ENCODE measurements at regions of chr17 and their contacts with region 1.

Region 1: GRCh38 chr17:2244545-2245525 is 58.8 kb downstream of the SMG6 start:
- DNase-seq: peak; percentile 72 to 90 (median 86)
- ATAC-seq: peak; percentile 91
- H3K4me3 ChIP-seq: no peak overlapping the region
- H3K4me3 Mint-ChIP-seq: no peak overlapping the region
- H3K27ac ChIP-seq: peak overlapping the region in 1 of 2 experiments; percentile 23
- H3K27ac Mint-ChIP-seq: peak overlapping the region; percentile 78
- H3K4me1 ChIP-seq: peaks cover 11% of the 10 kb centered on the region
- H3K4me1 Mint-ChIP-seq: peaks cover 32% of the 10 kb centered on the region
- H3K27me3 ChIP-seq: no peaks in the 10 kb centered on the region
- H3K27me3 Mint-ChIP-seq: no peaks in the 10 kb centered on the region
- CTCF ChIP-seq: peak; percentile 94

Region 2: GRCh38 chr17:2064980-2065785 is 179.7 kb before region 1 on chr17:
- CTCF ChIA-PET with region 1: interaction called, 240 read pairs
- POLR2A ChIA-PET with region 1: interaction called, 3 read pairs
- intact Hi-C with region 1: no loop called
- DNase-seq: peak in 5 of 9 experiments; percentile 47 to 62 (median 56)
- ATAC-seq: peak; percentile 58
- H3K4me3 ChIP-seq: no peak overlapping the region
- H3K4me3 Mint-ChIP-seq: no peak overlapping the region
- H3K27ac ChIP-seq: no peak overlapping the region
- H3K27ac Mint-ChIP-seq: peak overlapping the region; percentile 67
- H3K4me1 ChIP-seq: peaks cover 7% of the 10 kb centered on the region
- H3K4me1 Mint-ChIP-seq: peaks cover 36% of the 10 kb centered on the region
- H3K27me3 ChIP-seq: no peaks in the 10 kb centered on the region
- H3K27me3 Mint-ChIP-seq: peaks cover 16% of the 10 kb centered on the region
- CTCF ChIP-seq: no peak

Region 3: GRCh38 chr17:2144701-2145100 is 100.1 kb before region 1 on chr17:
- CTCF ChIA-PET with region 1: interaction called, 12 read pairs
- POLR2A ChIA-PET with region 1: no interaction called
- intact Hi-C with region 1: no loop called
- DNase-seq: no peak
- ATAC-seq: no peak
- H3K4me3 ChIP-seq: no peak overlapping the region
- H3K4me3 Mint-ChIP-seq: no peak overlapping the region
- H3K27ac ChIP-seq: no peak overlapping the region
- H3K27ac Mint-ChIP-seq: no peak overlapping the region
- H3K4me1 ChIP-seq: no peaks in the 10 kb centered on the region
- H3K4me1 Mint-ChIP-seq: peaks cover 3% of the 10 kb centered on the region
- H3K27me3 ChIP-seq: no peaks in the 10 kb centered on the region
- H3K27me3 Mint-ChIP-seq: no peaks in the 10 kb centered on the region
- CTCF ChIP-seq: no peak

Region 4: DNA sequence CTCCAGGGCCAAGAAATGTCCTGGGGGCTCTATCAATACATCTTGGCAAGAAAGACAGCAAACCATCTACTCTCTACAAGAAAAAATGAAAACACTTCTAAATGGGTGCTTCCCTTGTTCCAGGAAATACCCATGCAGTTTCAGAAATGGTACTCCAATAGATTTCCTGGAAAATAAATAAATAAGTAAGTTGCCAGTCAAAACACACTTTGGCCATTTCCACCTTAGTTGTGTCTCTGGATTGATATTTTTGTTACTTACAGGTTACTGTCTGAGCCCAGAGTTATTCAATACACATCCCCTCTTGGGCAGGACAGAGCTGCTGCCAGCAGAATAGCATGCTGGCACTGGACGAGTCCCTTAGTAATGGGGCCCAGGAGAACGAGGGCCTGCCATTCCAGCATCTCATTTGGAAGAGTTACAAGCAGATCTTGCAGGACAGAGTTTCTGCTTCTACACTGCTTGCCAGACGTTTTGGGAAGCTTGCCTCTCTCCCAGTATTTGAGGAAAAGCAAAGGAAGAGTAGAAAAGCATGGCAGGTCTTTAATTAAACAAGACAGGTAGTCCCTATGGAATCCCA is 41.7 kb before region 1 on chr17:
- CTCF ChIA-PET with region 1: interaction called, 12 read pairs
- POLR2A ChIA-PET with region 1: interaction called, 3 read pairs
- intact Hi-C with region 1: no loop called
- DNase-seq: no peak
- ATAC-seq: no peak
- H3K4me3 ChIP-seq: no peak overlapping the region
- H3K4me3 Mint-ChIP-seq: no peak overlapping the region
- H3K27ac ChIP-seq: no peak overlapping the region
- H3K27ac Mint-ChIP-seq: peak overlapping the region; percentile 30
- H3K4me1 ChIP-seq: peaks cover 9% of the 10 kb centered on the region
- H3K4me1 Mint-ChIP-seq: peaks cover 20% of the 10 kb centered on the region
- H3K27me3 ChIP-seq: no peaks in the 10 kb centered on the region
- H3K27me3 Mint-ChIP-seq: no peaks in the 10 kb centered on the region
- CTCF ChIP-seq: no peak

Region 5: DNA sequence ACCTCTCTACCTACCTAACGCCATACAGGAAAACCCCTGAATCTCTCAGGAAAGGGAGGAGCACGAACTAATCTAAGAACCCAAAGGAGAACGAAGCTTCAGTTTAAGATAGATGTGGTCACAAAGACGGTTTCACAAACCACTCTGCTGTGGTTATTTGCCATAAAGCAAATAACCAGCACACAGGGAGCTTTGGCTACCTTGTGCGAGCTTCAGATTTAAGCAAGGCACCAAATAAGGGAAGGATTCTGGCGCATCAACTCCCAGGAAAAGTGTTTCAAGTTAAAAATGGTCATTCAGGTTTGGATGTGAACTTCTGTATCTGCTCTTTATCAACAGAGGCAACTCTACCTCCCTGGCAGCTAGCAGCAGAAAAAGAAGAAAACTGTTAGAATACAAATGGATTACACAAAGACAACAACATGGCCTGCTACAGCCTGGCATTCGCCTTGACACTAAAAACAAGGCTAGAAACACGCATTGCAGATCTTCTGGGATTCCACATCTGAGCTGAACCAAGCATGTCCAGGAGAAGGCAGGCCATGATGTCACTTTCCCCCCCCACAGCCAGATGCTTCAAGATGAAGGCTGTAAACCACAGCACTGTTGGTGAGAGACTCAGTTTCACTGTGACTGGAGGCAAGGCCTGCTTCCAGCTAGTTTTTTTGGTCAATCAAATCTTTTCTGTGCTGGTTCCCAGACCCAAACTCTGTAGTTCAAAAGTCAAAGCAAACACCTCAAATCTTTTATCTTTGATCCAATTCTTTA is 15.1 kb after region 1 on chr17:
- CTCF ChIA-PET with region 1: interaction called, 124 read pairs
- POLR2A ChIA-PET with region 1: interaction called, 6 read pairs
- intact Hi-C with region 1: no loop called
- DNase-seq: peak; percentile 7 to 87 (median 61)
- ATAC-seq: peak; percentile 55
- H3K4me3 ChIP-seq: peak overlapping the region in 1 of 2 experiments; percentile 21
- H3K4me3 Mint-ChIP-seq: peak overlapping the region; percentile 59
- H3K27ac ChIP-seq: peak overlapping the region; percentile 43 to 74
- H3K27ac Mint-ChIP-seq: peak overlapping the region; percentile 95
- H3K4me1 ChIP-seq: peaks cover 67% of the 10 kb centered on the region
- H3K4me1 Mint-ChIP-seq: peaks cover 69% of the 10 kb centered on the region
- H3K27me3 ChIP-seq: no peaks in the 10 kb centered on the region
- H3K27me3 Mint-ChIP-seq: no peaks in the 10 kb centered on the region
- CTCF ChIP-seq: no peak

Region 6: DNA sequence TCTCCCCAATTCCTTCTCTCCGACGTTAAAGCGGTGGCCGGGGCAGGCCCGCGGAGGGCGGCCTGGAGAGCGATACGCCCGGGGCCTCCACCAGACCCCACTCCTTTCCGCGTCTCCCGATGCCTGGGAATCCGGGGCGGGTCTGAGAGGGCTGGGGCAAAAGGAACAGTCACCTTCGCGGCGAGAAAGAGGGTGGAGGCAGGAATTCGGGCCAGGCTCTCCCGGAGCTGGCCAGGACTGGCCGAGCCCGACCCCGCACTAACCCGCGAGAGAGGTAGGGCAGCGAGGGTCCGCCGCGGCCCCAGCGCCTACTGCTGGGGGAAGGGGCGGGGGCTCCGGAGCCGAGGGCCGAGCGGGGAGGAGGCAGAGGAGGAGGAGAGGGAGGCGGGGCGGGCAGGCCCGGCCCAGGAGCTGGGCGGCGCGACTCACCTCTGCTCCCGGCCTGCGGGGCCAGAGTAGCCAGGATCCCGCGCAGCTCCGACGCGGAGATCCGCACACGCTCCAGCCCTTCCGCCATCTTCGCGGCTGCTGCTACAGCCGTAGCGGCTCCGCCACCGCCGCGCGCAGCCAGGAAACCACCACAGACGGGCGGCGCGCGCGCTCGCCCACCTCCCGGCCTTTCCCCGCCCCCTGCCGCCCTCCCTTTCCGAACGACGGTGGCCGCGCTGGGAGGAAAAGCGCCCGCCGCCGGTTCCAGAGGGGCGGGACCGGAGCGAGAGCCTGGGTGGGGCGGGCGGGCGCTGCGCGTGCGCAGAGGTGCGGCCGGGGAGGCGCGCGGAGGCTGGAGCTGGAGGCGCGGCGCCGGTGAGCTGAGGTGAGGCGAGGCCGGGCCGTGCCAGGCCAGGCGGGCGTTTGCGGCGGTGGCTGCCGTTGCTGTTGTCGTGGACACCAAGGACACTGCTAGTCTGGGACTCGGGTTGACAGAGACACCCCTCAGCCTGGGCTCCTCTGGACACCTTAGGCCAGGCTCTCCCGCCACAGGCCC is 58.7 kb after region 1 on chr17 and contains the starts of genes SMG6 and SRR:
- CTCF ChIA-PET with region 1: interaction called, 14 read pairs
- POLR2A ChIA-PET with region 1: no interaction called
- intact Hi-C with region 1: no loop called
- DNase-seq: peak; percentile 89 to 98 (median 95)
- ATAC-seq: peak; percentile 91
- H3K4me3 ChIP-seq: peak within 1 kb of the TSS; percentile 95 to 98
- H3K4me3 Mint-ChIP-seq: peak within 1 kb of the TSS; percentile 93
- H3K27ac ChIP-seq: peak within 1 kb of the TSS; percentile 76 to 85
- H3K27ac Mint-ChIP-seq: peak within 1 kb of the TSS; percentile 91
- H3K4me1 ChIP-seq: peaks cover 18% of the 10 kb centered on the region
- H3K4me1 Mint-ChIP-seq: peaks cover 43% of the 10 kb centered on the region
- H3K27me3 ChIP-seq: no peaks in the 10 kb centered on the region
- H3K27me3 Mint-ChIP-seq: no peaks in the 10 kb centered on the region
- CTCF ChIP-seq: no peak
- total RNA-seq, gene SMG6: 36.1 to 37.8 TPM
- total RNA-seq, gene SRR: 1.8 to 2.9 TPM